Naive thymus-derived CD4-positive, alpha-beta T cell (primary cell): ENCODE measurements at regions of chr3 and their contacts with region 1.

Region 1: GRCh38 chr3:33787328-33788009 is 11.0 kb upstream of the PDCD6IP start:
- DNase-seq: peak; percentile 16 to 71 (median 58)
- ATAC-seq: peak; percentile 83
- H3K4me3 ChIP-seq: no peak overlapping the region
- H3K4me3 Mint-ChIP-seq: peak overlapping the region in 7 of 10 donors; percentile 46 to 73 (median 62)
- H3K27ac ChIP-seq: no peak overlapping the region
- H3K27ac Mint-ChIP-seq: no peak overlapping the region
- H3K4me1 ChIP-seq: no peaks in the 10 kb centered on the region
- H3K4me1 Mint-ChIP-seq: peaks cover 0 to 9% (median 0%) of the 10 kb centered on the region in 7 donors
- H3K27me3 ChIP-seq: no peaks in the 10 kb centered on the region
- H3K27me3 Mint-ChIP-seq: peaks cover 5 to 24% (median 10%) of the 10 kb centered on the region in 5 donors

Region 2: GRCh38 chr3:33131331-33132018 is 656.0 kb before region 1 on chr3:
- CTCF ChIA-PET with region 1: interaction called, 27 read pairs
- POLR2A ChIA-PET with region 1: no interaction called
- intact Hi-C with region 1: loop called in 1 of 2 experiments (anchors 1 kb)
- DNase-seq: peak in 6 of 9 donors; percentile 5 to 46 (median 37)
- ATAC-seq: peak; percentile 80
- H3K4me3 ChIP-seq: no peak overlapping the region
- H3K4me3 Mint-ChIP-seq: no peak overlapping the region
- H3K27ac ChIP-seq: no peak overlapping the region
- H3K27ac Mint-ChIP-seq: no peak overlapping the region
- H3K4me1 ChIP-seq: no peaks in the 10 kb centered on the region
- H3K4me1 Mint-ChIP-seq: peaks cover 2 to 12% (median 11%) of the 10 kb centered on the region in 7 donors
- H3K27me3 ChIP-seq: no peaks in the 10 kb centered on the region
- H3K27me3 Mint-ChIP-seq: no peaks in the 10 kb centered on the region

Region 3: GRCh38 chr3:33377926-33378325 is 409.5 kb before region 1 on chr3:
- CTCF ChIA-PET with region 1: interaction called, 11 read pairs
- POLR2A ChIA-PET with region 1: no interaction called
- intact Hi-C with region 1: loop called (anchors 2 kb)
- DNase-seq: no peak
- ATAC-seq: peak; percentile 27
- H3K4me3 ChIP-seq: no peak overlapping the region
- H3K4me3 Mint-ChIP-seq: no peak overlapping the region
- H3K27ac ChIP-seq: no peak overlapping the region
- H3K27ac Mint-ChIP-seq: no peak overlapping the region
- H3K4me1 ChIP-seq: no peaks in the 10 kb centered on the region
- H3K4me1 Mint-ChIP-seq: peaks cover under 1 to 3% (median 2%) of the 10 kb centered on the region in 7 donors
- H3K27me3 ChIP-seq: no peaks in the 10 kb centered on the region
- H3K27me3 Mint-ChIP-seq: peaks cover 0 to 3% (median 2%) of the 10 kb centered on the region in 5 donors

Region 4: DNA sequence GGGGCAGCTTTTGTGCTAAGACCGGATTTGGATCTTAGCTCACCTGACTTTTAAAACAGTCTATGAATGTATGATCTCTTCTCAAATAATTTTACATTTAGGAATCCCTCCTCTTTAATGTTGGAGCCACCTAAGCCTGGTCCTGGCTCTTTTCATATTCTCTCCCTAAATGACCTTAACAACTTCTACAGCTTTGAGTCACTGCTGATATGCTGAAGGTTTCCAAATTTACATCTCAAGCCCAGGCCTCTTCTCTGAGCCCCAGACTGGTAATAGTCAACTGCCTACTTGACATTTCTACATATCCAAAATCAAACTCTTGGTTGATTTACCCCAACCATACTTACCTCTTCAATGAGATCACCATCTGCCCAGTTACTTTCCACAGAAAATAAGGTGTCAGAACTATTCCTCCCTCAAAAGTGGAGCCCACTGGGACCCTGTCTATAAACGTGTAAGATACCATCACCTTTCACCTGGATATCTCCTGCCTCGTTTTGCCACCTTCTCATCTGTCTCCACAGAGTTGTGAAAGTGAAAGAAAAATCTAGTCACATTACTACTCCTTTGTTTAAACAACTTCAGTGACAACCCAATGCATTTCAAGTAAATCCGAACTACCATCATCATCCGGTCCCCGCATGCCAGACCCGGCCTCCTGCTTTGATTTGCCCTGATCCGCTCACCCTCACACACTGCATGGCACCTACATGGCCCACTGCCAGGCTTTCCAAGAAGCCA is 396.0 kb before region 1 on chr3:
- CTCF ChIA-PET with region 1: no interaction called
- POLR2A ChIA-PET with region 1: no interaction called
- intact Hi-C with region 1: no loop called
- DNase-seq: no peak
- ATAC-seq: no peak
- H3K4me3 ChIP-seq: no peak overlapping the region
- H3K4me3 Mint-ChIP-seq: no peak overlapping the region
- H3K27ac ChIP-seq: no peak overlapping the region
- H3K27ac Mint-ChIP-seq: peak overlapping the region in 6 of 9 donors; percentile 5 to 71 (median 32)
- H3K4me1 ChIP-seq: no peaks in the 10 kb centered on the region
- H3K4me1 Mint-ChIP-seq: peaks cover 0 to 18% (median 4%) of the 10 kb centered on the region in 7 donors
- H3K27me3 ChIP-seq: no peaks in the 10 kb centered on the region
- H3K27me3 Mint-ChIP-seq: no peaks in the 10 kb centered on the region

Region 5: DNA sequence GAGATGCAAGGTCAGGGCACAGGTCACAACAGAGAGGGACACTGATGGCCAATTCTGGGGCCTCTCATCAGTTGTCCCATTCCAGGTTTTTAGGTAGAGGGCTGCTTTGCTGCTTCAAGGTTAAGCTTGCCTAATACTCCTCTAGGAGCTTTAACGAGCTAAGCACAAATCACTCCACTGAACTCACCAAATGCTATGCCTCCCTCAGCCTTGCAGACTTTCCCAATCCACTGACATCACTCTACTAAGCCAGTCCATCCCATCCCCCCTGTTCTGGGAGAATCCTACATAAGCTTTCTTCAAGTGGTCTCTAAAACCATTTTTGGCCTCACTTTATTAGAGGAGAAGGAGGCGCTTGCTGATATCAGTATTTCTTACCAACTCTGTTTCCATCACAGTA is 13.8 kb before region 1 on chr3:
- CTCF ChIA-PET with region 1: interaction called, 31 read pairs
- POLR2A ChIA-PET with region 1: no interaction called
- intact Hi-C with region 1: no loop called
- DNase-seq: no peak
- ATAC-seq: no peak
- H3K4me3 ChIP-seq: no peak overlapping the region
- H3K4me3 Mint-ChIP-seq: no peak overlapping the region
- H3K27ac ChIP-seq: no peak overlapping the region
- H3K27ac Mint-ChIP-seq: peak overlapping the region in 1 of 9 donors; percentile 53
- H3K4me1 ChIP-seq: no peaks in the 10 kb centered on the region
- H3K4me1 Mint-ChIP-seq: no peaks in the 10 kb centered on the region
- H3K27me3 ChIP-seq: no peaks in the 10 kb centered on the region
- H3K27me3 Mint-ChIP-seq: peaks cover 0 to 12% (median 0%) of the 10 kb centered on the region in 5 donors